ENCODE measurements at regions of chr2 and their contacts with region 1.

Region 1: DNA sequence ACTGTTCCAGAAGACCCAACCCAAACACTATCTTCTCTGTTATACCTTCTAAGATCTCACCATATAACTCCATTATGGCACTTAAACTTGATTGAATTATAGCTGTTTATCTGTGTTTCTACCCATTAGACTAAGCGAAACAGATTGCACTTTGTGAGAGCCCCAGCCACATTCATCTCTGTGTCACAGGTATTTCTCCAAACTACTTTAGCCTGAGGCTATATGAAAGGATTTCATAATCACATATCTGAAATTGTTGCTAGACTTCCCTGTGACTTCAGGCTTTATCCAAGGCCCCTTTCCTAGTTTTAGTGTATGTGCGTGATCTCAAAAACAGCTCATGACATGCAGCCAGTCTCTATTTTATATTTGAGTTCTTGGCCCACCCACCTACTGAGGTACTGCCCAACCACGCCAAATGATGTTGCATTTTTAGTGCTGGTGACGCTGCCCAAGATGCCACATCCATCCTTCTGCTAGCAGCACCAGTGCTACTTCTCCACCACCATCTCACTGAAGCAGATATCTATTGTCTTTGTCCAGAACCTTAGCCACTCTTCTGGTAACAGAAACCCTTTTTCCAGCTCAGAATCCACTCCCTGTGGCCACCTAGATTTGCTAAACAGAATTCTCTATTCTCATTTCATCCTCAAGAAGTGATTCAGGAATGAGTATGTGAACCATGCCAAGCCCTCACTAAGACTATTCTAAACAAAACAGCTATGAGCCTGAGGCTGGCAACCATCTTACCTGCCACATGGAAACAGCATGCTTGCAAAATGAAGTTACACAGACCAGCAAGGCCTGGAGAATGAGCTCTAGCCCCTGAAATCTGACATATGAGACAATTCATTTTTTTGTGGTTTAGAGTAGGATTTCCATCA is 744.8 kb upstream of the ACVR2A start:
- DNase-seq: no peak
- H3K4me3 ChIP-seq: no peak overlapping the region
- H3K27ac ChIP-seq: peak overlapping the region; percentile 76 to 87
- H3K4me1 ChIP-seq: no peaks in the 10 kb centered on the region
- H3K27me3 ChIP-seq: no peaks in the 10 kb centered on the region
- CTCF ChIP-seq: no peak
- POLR2A ChIP-seq: no peak

Region 2: GRCh38 chr2:147141930-147142329 is 41.9 kb after region 1 on chr2:
- intact Hi-C with region 1: loop called (anchors 2 kb)
- DNase-seq: no peak
- H3K4me3 ChIP-seq: no peak overlapping the region
- H3K27ac ChIP-seq: no peak overlapping the region
- H3K4me1 ChIP-seq: no peaks in the 10 kb centered on the region
- H3K27me3 ChIP-seq: no peaks in the 10 kb centered on the region
- CTCF ChIP-seq: no peak
- POLR2A ChIP-seq: no peak

Measured in breast epithelium (tissue), 4 donors.